Calu3 (cell line): ENCODE measurements at regions of chr6 and their contacts with region 1.

Region 1: DNA sequence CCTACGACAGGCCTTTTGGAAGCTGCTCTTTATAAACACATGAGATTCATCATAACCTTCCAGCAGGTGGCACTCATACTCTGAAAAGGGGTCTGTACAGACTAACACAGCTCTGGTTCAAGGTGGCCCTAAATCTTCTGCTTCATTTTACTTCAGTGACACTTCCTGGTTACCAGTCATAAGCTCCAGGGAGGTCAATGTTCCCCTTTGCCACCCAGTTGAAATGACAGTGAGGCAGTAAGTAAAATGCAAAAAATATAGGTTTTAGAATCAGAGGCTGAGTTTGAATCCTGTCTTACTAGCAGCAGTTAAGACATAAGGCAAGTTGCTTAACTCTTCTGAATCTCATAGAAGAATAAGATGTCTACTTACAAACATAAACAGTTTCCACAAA is 132.8 kb downstream of the CDK19 start:
- DNase-seq: peak; percentile 74
- H3K4me3 Mint-ChIP-seq: peak overlapping the region; percentile 12
- H3K27ac Mint-ChIP-seq: peak overlapping the region; percentile 64
- H3K4me1 Mint-ChIP-seq: peaks cover 12% of the 10 kb centered on the region
- H3K27me3 Mint-ChIP-seq: no peaks in the 10 kb centered on the region
- CTCF ChIP-seq: peak; percentile 60

Region 2: GRCh38 chr6:110618591-110619267 is 63.7 kb before region 1 on chr6:
- CTCF ChIA-PET with region 1: interaction called, 13 read pairs
- intact Hi-C with region 1: no loop called
- DNase-seq: peak; percentile 19
- H3K4me3 Mint-ChIP-seq: peak overlapping the region; percentile 30
- H3K27ac Mint-ChIP-seq: peak overlapping the region; percentile 43
- H3K4me1 Mint-ChIP-seq: peaks cover 13% of the 10 kb centered on the region
- H3K27me3 Mint-ChIP-seq: no peaks in the 10 kb centered on the region
- CTCF ChIP-seq: no peak

Region 3: GRCh38 chr6:110815217-110816109 is 133.0 kb after region 1 on chr6 and contains the start of gene CDK19:
- CTCF ChIA-PET with region 1: interaction called, 8 read pairs
- intact Hi-C with region 1: loop called (anchors 5 kb)
- DNase-seq: peak; percentile 98
- H3K4me3 Mint-ChIP-seq: peak within 1 kb of the TSS; percentile 91
- H3K27ac Mint-ChIP-seq: peak within 1 kb of the TSS; percentile 91
- H3K4me1 Mint-ChIP-seq: peaks cover 17% of the 10 kb centered on the region
- H3K27me3 Mint-ChIP-seq: no peaks in the 10 kb centered on the region
- CTCF ChIP-seq: no peak
- total RNA-seq, gene CDK19: 17.7 and 24.3 TPM in 2 replicates

Region 4: GRCh38 chr6:110873981-110874879 is 191.8 kb after region 1 on chr6 and contains the start of gene AMD1:
- CTCF ChIA-PET with region 1: interaction called, 31 read pairs
- intact Hi-C with region 1: loop called (anchors 1 kb)
- DNase-seq: peak; percentile 97
- H3K4me3 Mint-ChIP-seq: peak within 1 kb of the TSS; percentile 85
- H3K27ac Mint-ChIP-seq: peak within 1 kb of the TSS; percentile 98
- H3K4me1 Mint-ChIP-seq: peaks cover 20% of the 10 kb centered on the region
- H3K27me3 Mint-ChIP-seq: no peaks in the 10 kb centered on the region
- CTCF ChIP-seq: no peak
- total RNA-seq, gene AMD1: 74.0 and 74.6 TPM in 2 replicates

Region 5: GRCh38 chr6:110949679-110950285 is 267.3 kb after region 1 on chr6:
- CTCF ChIA-PET with region 1: interaction called, 8 read pairs
- intact Hi-C with region 1: loop called (anchors 1 kb)
- DNase-seq: no peak
- H3K4me3 Mint-ChIP-seq: no peak overlapping the region
- H3K27ac Mint-ChIP-seq: no peak overlapping the region
- H3K4me1 Mint-ChIP-seq: peaks cover 34% of the 10 kb centered on the region
- H3K27me3 Mint-ChIP-seq: no peaks in the 10 kb centered on the region
- CTCF ChIP-seq: peak; percentile 47

Region 6: DNA sequence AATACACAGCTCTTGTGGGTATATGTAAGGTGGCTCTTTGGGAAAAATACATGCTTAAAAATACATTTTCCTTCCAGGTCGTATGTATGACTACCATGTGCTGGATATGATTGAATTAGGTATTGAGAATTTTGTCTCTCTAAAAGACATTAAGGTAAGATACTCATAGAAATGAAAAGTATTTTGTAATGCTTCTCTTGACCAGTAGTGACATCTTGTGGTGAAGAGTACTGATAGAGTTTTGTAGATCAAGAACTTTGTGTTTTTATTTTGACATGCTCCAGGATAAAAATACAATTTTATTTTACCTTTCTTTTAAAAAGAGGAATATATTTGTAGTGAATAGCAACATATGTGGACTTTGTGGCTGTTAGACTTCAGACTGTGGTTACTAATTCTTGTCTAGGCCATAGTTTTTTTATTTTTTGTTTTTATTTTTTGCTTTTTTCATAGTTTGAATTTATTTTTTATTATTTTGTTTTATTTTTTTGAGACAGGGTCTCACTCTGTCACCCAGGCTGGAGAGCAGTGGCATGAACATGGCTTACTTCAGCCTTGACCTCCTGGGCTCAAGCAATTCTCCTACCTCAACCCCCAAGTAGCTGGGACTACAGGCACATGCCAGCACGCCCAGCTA is 317.3 kb after region 1 on chr6:
- CTCF ChIA-PET with region 1: no interaction called
- intact Hi-C with region 1: loop called (anchors 1 kb)
- DNase-seq: no peak
- H3K4me3 Mint-ChIP-seq: no peak overlapping the region
- H3K27ac Mint-ChIP-seq: no peak overlapping the region
- H3K4me1 Mint-ChIP-seq: no peaks in the 10 kb centered on the region
- H3K27me3 Mint-ChIP-seq: no peaks in the 10 kb centered on the region
- CTCF ChIP-seq: no peak